ENCODE measurements at regions of chrX and their contacts with region 1.

Region 1: DNA sequence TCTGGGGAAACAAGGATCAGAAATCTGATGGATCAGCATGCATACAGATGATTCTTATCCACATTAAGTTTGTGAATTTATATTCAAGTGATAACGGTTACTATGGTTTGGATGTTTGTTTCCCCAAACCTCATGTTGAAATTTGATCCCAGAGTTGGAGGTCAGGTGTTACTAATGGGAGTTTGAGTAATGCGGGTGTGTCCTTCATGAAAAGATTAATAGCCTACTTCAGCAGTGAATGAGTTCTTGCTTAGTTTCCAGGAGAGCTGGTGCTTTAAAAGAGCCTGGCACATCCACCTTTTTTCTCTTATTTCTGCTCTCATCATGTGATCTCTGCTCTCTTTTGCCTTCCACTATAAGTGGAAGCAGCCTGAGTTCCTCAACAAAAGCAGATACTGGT is 712.4 kb downstream of the IL1RAPL1 start:
- DNase-seq: no peak
- H3K4me3 ChIP-seq: no peak overlapping the region
- H3K4me3 Mint-ChIP-seq: no peak overlapping the region
- H3K27ac ChIP-seq: no peak overlapping the region
- H3K27ac Mint-ChIP-seq: no peak overlapping the region
- H3K4me1 ChIP-seq: no peaks in the 10 kb centered on the region
- H3K4me1 Mint-ChIP-seq: no peaks in the 10 kb centered on the region
- H3K27me3 ChIP-seq: no peaks in the 10 kb centered on the region
- H3K27me3 Mint-ChIP-seq: peaks cover 0 to 3% (median 0%) of the 10 kb centered on the region in 3 donors
- CTCF ChIP-seq: no peak

Region 2: DNA sequence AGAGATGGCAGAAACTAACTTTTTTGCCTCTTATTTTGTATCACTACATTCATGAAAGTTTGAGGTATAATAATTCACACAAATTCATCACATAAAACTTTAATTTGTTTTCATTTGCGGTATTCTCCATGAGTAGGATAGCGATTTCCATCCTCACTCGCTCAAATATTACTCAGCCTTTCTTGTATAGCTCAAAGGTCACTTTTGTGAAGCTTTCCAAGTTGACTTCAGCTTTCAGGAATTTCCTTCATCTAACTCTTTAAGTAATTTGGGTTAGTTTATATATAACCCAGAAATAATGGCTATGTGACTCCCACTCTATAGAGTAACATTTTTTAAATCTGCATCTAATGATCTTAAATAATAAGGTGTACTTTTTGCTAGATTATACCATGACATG is 398.1 kb before region 1 on chrX:
- intact Hi-C with region 1: loop called in 1 of 2 experiments (anchors 10 kb)
- DNase-seq: no peak
- H3K4me3 ChIP-seq: no peak overlapping the region
- H3K4me3 Mint-ChIP-seq: no peak overlapping the region
- H3K27ac ChIP-seq: no peak overlapping the region
- H3K27ac Mint-ChIP-seq: no peak overlapping the region
- H3K4me1 ChIP-seq: no peaks in the 10 kb centered on the region
- H3K4me1 Mint-ChIP-seq: no peaks in the 10 kb centered on the region
- H3K27me3 ChIP-seq: no peaks in the 10 kb centered on the region
- H3K27me3 Mint-ChIP-seq: peaks cover 0 to 4% (median 0%) of the 10 kb centered on the region in 3 donors
- CTCF ChIP-seq: no peak